Activated CD4-positive, alpha-beta T cell treated with anti-CD3 and anti-CD28 coated beads, Interleukin-2, amount 10 ng/mL, durations not matched to agents 24 days and 14 days (primary cell): ENCODE measurements at regions of chr15 and their contacts with region 1.

Region 1: GRCh38 chr15:34209421-34210282 is at the start of gene KATNBL1:
- DNase-seq: peak; percentile 99
- H3K4me3 Mint-ChIP-seq: peak within 1 kb of the TSS; percentile 87
- H3K27ac Mint-ChIP-seq: peak within 1 kb of the TSS; percentile 81
- H3K4me1 Mint-ChIP-seq: peaks cover 16% of the 10 kb centered on the region
- H3K27me3 Mint-ChIP-seq: peaks cover 6% of the 10 kb centered on the region
- total RNA-seq, gene KATNBL1: 41.1 and 44.2 TPM in 2 replicates

Region 2: GRCh38 chr15:34038023-34038870 is 171.4 kb before region 1 on chr15:
- intact Hi-C with region 1: loop called (anchors 2 kb)
- DNase-seq: peak; percentile 90
- H3K4me3 Mint-ChIP-seq: peak overlapping the region; percentile 88
- H3K27ac Mint-ChIP-seq: peak overlapping the region; percentile 94
- H3K4me1 Mint-ChIP-seq: peaks cover 23% of the 10 kb centered on the region
- H3K27me3 Mint-ChIP-seq: no peaks in the 10 kb centered on the region

Region 3: GRCh38 chr15:34056936-34057335 is 152.7 kb before region 1 on chr15:
- intact Hi-C with region 1: loop called (anchors 1 kb)
- DNase-seq: no peak
- H3K4me3 Mint-ChIP-seq: no peak overlapping the region
- H3K27ac Mint-ChIP-seq: no peak overlapping the region
- H3K4me1 Mint-ChIP-seq: peaks cover 2% of the 10 kb centered on the region
- H3K27me3 Mint-ChIP-seq: peaks cover 7% of the 10 kb centered on the region

Region 4: DNA sequence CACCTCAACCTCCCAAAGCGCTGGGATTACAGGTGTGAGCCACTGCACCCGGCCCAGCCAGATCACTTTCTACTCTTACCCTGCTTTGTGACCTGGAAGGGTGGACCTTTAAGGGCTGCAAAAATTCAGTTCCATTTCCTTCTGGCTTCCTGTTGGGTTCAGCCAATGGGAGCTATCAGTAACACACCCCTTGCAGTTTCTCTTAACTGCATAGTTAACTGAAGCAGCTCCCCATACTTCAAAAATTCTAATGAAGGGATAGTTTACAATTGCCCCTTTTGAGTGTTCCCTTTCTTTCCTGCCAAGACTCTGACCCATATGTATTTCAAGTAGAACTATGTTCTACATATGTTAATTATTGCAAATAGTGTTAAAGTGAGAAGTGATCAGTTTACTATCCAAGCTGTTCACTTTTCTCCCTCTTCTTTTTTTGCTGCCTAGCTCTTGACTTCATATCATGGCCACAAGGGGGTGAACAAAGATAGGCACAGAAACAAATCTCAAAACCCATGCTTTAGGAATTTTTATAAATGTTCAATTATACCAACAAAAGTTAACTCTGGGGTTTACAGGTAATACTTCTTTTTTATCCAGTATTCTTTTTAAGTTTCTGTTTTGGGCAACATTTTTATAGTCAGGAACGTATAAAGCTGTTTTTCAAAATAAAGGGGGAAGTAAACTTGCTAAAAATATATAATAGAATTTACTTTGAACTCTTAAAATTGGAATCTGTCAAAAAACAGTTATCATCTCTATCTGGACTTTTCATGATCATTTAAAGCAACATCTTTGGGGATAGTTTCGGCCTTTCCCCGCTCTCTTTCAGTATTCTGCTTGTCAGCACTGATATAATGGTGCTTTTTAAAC is 99.6 kb before region 1 on chr15:
- intact Hi-C with region 1: loop called (anchors 1 kb)
- DNase-seq: peak; percentile 74
- H3K4me3 Mint-ChIP-seq: no peak overlapping the region
- H3K27ac Mint-ChIP-seq: no peak overlapping the region
- H3K4me1 Mint-ChIP-seq: peaks cover 5% of the 10 kb centered on the region
- H3K27me3 Mint-ChIP-seq: peaks cover 2% of the 10 kb centered on the region

Region 5: GRCh38 chr15:34223904-34224596 is 14.4 kb after region 1 on chr15:
- intact Hi-C with region 1: loop called (anchors 1 kb)
- DNase-seq: peak; percentile 60
- H3K4me3 Mint-ChIP-seq: peak overlapping the region; percentile 95
- H3K27ac Mint-ChIP-seq: peak overlapping the region; percentile 89
- H3K4me1 Mint-ChIP-seq: peaks cover 26% of the 10 kb centered on the region
- H3K27me3 Mint-ChIP-seq: no peaks in the 10 kb centered on the region